Heart right ventricle (tissue), 16 donors: ENCODE measurements at regions of chr12 and their contacts with region 1.

Region 1: GRCh38 chr12:114403011-114403689 is 2.8 kb downstream of the TBX5 start:
- DNase-seq: peak; percentile 19 to 60
- ATAC-seq: peak; percentile 42 to 76 (median 64)
- H3K4me3 ChIP-seq: peak overlapping the region; percentile 18 to 79 (median 69)
- H3K27ac ChIP-seq: peak overlapping the region; percentile 68 to 95 (median 91)
- H3K4me1 ChIP-seq: peaks cover 0 to 41% (median 21%) of the 10 kb centered on the region in 9 donors
- H3K27me3 ChIP-seq: peaks cover 0 to 100% (median 64%) of the 10 kb centered on the region in 7 donors
- CTCF ChIP-seq: peak in 6 of 9 donors; percentile 13 to 61 (median 40)

Region 2: GRCh38 chr12:114355389-114356088 is 47.6 kb before region 1 on chr12:
- intact Hi-C with region 1: loop called in 1 of 10 experiments (anchors 10 kb)
- DNase-seq: peak; percentile 21 to 33
- ATAC-seq: peak; percentile 69 to 89 (median 80)
- H3K4me3 ChIP-seq: no peak overlapping the region
- H3K27ac ChIP-seq: peak overlapping the region in 1 of 10 donors; percentile 36
- H3K4me1 ChIP-seq: peaks cover 0 to 14% (median 3%) of the 10 kb centered on the region in 9 donors
- H3K27me3 ChIP-seq: no peaks in the 10 kb centered on the region
- CTCF ChIP-seq: peak in 8 of 9 donors; percentile 24 to 59 (median 44)

Region 3: GRCh38 chr12:114368685-114369452 is 34.3 kb before region 1 on chr12:
- intact Hi-C with region 1: loop called in 2 of 10 experiments (anchors 5 kb)
- DNase-seq: peak; percentile 12 to 19
- ATAC-seq: peak in 7 of 8 donors; percentile 44 to 86 (median 56)
- H3K4me3 ChIP-seq: no peak overlapping the region
- H3K27ac ChIP-seq: peak overlapping the region; percentile 10 to 72 (median 45)
- H3K4me1 ChIP-seq: peaks cover 6 to 30% (median 13%) of the 10 kb centered on the region in 9 donors
- H3K27me3 ChIP-seq: no peaks in the 10 kb centered on the region
- CTCF ChIP-seq: no peak